OCI-LY7 (cell line): ENCODE measurements at regions of chr9 and their contacts with region 1.

Region 1: GRCh38 chr9:37350486-37351190 is 71.9 kb upstream of the GRHPR start:
- DNase-seq: no peak
- H3K4me3 ChIP-seq: no peak overlapping the region
- H3K27ac ChIP-seq: no peak overlapping the region
- H3K4me1 ChIP-seq: no peaks in the 10 kb centered on the region
- CTCF ChIP-seq: no peak

Region 2: GRCh38 chr9:37337301-37337890 is 13.2 kb before region 1 on chr9:
- CTCF ChIA-PET with region 1: no interaction called
- POLR2A ChIA-PET with region 1: interaction called, 13 read pairs
- intact Hi-C with region 1: no loop called
- DNase-seq: peak; percentile 64
- H3K4me3 ChIP-seq: peak overlapping the region; percentile 52
- H3K27ac ChIP-seq: peak overlapping the region; percentile 98
- H3K4me1 ChIP-seq: peaks cover 86% of the 10 kb centered on the region
- CTCF ChIP-seq: no peak

Region 3: DNA sequence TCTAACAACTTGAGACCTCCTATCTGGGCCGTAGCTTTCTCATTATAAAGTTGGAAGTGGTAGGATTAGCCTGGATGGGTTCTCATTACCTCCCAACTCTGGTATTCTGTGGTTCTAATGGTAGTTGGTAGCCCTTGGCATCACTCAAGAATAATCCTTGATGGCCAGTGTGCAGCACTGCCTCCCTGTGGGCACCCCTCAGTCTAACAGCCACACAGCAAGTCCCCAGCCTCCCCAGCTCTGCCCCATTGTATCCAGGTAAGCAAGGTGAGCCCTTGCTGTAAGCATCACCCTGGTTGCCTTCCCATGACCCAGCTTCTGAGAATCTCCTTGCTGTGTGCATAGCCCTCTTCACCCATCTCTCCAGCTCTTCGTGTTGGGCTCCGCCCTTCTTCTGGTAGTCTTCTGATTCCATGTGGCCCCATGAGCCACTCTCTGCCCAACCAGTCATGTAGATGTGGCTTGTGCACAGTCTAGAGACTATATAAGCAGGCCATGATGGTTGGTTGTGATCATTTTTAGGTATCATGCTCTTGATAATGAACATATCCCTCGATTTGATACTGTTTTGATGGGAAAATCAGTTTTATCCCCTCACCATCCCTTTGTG is 14.2 kb after region 1 on chr9:
- CTCF ChIA-PET with region 1: interaction called, 4 read pairs
- POLR2A ChIA-PET with region 1: interaction called, 10 read pairs
- intact Hi-C with region 1: no loop called
- DNase-seq: peak; percentile 58
- H3K4me3 ChIP-seq: no peak overlapping the region
- H3K27ac ChIP-seq: no peak overlapping the region
- H3K4me1 ChIP-seq: peaks cover 67% of the 10 kb centered on the region
- CTCF ChIP-seq: peak; percentile 79

Region 4: DNA sequence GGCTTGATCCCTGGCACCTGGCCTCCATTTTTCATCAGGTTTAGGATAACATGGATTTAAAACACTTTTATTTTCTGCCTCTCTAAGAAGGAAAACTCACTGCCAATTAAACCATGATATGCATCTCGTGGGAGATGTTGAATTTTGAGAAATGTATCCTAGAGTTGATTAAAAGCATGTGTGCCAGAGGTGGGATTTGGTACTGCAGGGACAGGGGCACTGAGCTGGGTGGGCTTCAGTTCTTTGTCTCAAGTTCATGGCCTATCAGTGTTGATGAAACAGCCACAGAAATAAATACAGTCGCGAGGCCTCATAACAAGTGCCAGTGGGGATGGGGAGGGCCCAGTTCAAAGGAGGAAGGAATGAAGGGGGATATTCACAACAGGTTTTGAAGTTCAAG is 170.0 kb after region 1 on chr9:
- CTCF ChIA-PET with region 1: no interaction called
- POLR2A ChIA-PET with region 1: no interaction called
- intact Hi-C with region 1: no loop called
- DNase-seq: no peak
- H3K4me3 ChIP-seq: no peak overlapping the region
- H3K27ac ChIP-seq: no peak overlapping the region
- H3K4me1 ChIP-seq: no peaks in the 10 kb centered on the region
- CTCF ChIP-seq: no peak

Region 5: GRCh38 chr9:37555786-37556185 is 205.1 kb after region 1 on chr9:
- CTCF ChIA-PET with region 1: no interaction called
- POLR2A ChIA-PET with region 1: no interaction called
- intact Hi-C with region 1: no loop called
- DNase-seq: no peak
- H3K4me3 ChIP-seq: no peak overlapping the region
- H3K27ac ChIP-seq: no peak overlapping the region
- H3K4me1 ChIP-seq: no peaks in the 10 kb centered on the region
- CTCF ChIP-seq: no peak